ENCODE measurements at regions of chr3 and their contacts with region 1.

Region 1: DNA sequence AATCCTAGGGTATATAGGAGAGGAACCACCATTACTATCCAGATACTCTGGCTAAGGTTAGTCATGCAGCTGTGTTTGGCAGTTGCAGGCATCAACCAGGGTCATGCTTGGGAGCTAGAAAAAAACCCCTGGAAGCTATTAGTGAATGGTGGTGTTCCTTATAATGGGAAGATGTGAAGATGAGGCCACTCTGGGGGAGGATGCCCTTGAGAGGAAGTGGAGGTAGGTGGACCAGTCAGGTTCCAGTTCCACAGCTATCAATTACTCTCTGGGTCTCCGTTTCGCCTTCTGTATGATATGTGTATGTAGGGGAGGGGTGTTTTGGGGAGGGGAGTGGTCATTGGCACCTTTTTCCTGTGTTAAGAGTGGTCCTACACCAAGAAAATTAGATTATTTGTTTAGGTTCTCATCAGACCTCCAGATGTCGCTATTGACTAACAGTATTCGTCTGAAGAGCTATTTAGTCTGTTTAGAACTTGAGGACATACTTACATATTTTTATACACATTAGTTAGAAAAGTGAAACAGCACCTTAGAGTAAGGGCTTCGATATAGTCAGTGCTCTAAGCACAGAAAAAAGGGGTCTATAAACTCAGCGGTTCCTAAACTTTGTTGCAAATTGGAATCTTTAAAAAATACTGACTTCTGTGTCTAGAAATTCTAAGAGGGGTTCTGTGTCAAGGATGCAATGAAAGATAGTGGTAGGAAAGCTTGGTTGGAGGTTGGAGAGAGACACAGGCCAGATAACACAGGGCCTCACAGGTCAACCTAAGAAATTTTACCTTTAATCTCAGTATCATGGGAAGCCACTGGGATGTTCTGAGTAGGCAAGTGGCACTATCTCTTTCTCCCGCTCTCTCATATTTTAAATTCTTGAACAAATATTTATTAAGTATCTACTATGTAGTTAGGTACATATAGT is 9.1 kb upstream of the HPS3 start:
- DNase-seq: peak; percentile 45
- ATAC-seq: peak; percentile 94
- H3K4me3 ChIP-seq: no peak overlapping the region
- H3K27ac ChIP-seq: no peak overlapping the region
- H3K4me1 ChIP-seq: no peaks in the 10 kb centered on the region
- H3K27me3 ChIP-seq: no peaks in the 10 kb centered on the region; a peak in 1 of 4 replicates
- CTCF ChIP-seq: peak; percentile 53 to 73 (median 55); a peak in 5 of 6 replicates
- EP300 ChIP-seq: no peak
- POLR2A ChIP-seq: no peak
- RAD21 ChIP-seq: peak; percentile 94

Region 2: GRCh38 chr3:149145974-149146373 is 25.7 kb after region 1 on chr3:
- CTCF ChIA-PET with region 1: interaction called, 15 read pairs
- POLR2A ChIA-PET with region 1: no interaction called
- RAD21 ChIA-PET with region 1: no interaction called
- SMC1A ChIA-PET with region 1: interaction called, 4 read pairs
- in situ Hi-C with region 1: no loop called
- intact Hi-C with region 1: no loop called
- DNase-seq: no peak
- ATAC-seq: peak; percentile 89
- H3K4me3 ChIP-seq: no peak overlapping the region
- H3K27ac ChIP-seq: no peak overlapping the region
- H3K4me1 ChIP-seq: peaks cover 16% of the 10 kb centered on the region; the same call in 1 of the 2 replicates
- H3K27me3 ChIP-seq: no peaks in the 10 kb centered on the region
- CTCF ChIP-seq: no peak
- EP300 ChIP-seq: no peak
- POLR2A ChIP-seq: no peak
- RAD21 ChIP-seq: no peak

Region 3: DNA sequence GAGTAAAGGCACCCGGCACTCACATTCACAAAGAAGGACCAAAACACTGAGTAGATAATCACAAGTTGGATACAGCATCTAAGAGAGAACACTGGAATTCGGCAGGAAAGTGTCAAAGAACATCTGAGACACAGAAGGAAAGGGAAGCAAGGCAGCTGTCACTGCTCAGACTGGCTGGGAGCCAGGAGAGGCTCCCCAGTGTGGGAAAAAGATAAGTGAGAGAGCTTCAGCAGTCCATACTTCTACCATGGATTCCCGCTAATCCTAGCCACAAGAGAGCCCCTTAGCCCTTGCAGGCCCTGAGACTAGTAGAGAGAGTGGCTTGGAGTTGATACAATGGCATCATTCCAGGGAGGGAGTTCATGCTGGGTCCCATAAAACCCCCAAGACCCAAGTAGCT is 138.0 kb after region 1 on chr3:
- CTCF ChIA-PET with region 1: interaction called, 14 read pairs
- POLR2A ChIA-PET with region 1: no interaction called
- RAD21 ChIA-PET with region 1: interaction called, 5 read pairs
- SMC1A ChIA-PET with region 1: interaction called, 7 read pairs
- in situ Hi-C with region 1: no loop called
- intact Hi-C with region 1: no loop called
- DNase-seq: no peak
- ATAC-seq: no peak
- H3K4me3 ChIP-seq: no peak overlapping the region
- H3K27ac ChIP-seq: no peak overlapping the region
- H3K4me1 ChIP-seq: no peaks in the 10 kb centered on the region
- H3K27me3 ChIP-seq: peaks cover 0 to 1% of the 10 kb centered on the region in 2 experiments; a peak in 1 of 4 replicates
- CTCF ChIP-seq: no peak
- EP300 ChIP-seq: no peak
- POLR2A ChIP-seq: no peak
- RAD21 ChIP-seq: no peak

Region 4: DNA sequence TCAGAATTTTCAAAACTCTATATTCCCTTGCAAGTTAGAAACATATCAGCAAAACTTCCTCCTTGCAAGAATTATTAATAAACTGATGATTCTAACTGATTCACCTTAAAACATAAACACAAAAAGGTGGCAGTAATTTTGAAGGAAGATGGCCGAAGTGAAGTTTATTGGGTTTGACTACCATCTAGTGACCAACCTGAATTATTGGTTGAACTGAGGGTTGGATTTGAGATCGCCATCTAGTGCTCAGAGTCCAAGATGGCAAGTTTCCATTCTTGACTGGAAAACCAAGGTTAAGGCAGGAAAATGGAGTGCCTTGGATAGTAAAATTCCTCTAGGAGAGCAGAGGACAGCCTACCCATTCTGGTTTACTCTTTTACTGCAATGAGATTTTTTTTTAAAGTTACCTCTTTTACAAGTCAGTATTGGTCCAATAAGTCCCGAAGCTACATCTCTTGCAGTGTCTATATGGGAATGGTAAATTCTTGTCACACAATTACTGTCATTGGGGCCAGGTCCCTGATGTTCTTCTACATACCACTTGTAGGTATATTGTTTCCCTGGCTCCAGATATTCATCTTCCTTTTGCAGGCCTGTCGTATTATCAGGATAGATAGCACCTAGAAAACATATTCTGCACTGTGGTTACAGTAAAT is 152.9 kb after region 1 on chr3:
- CTCF ChIA-PET with region 1: interaction called, 168 read pairs
- POLR2A ChIA-PET with region 1: no interaction called
- RAD21 ChIA-PET with region 1: interaction called, 36 read pairs
- SMC1A ChIA-PET with region 1: interaction called, 86 read pairs
- in situ Hi-C with region 1: loop called (anchors 5 kb)
- intact Hi-C with region 1: loop called (anchors 1 kb)
- DNase-seq: peak; percentile 45
- ATAC-seq: peak; percentile 91
- H3K4me3 ChIP-seq: no peak overlapping the region
- H3K27ac ChIP-seq: no peak overlapping the region
- H3K4me1 ChIP-seq: peaks cover 4% of the 10 kb centered on the region; the same call in 1 of the 2 replicates
- H3K27me3 ChIP-seq: no peaks in the 10 kb centered on the region
- CTCF ChIP-seq: peak; percentile 82 to 100 (median 97); a peak in 5 of 6 replicates
- EP300 ChIP-seq: no peak
- POLR2A ChIP-seq: no peak
- RAD21 ChIP-seq: peak; percentile 100

Region 5: DNA sequence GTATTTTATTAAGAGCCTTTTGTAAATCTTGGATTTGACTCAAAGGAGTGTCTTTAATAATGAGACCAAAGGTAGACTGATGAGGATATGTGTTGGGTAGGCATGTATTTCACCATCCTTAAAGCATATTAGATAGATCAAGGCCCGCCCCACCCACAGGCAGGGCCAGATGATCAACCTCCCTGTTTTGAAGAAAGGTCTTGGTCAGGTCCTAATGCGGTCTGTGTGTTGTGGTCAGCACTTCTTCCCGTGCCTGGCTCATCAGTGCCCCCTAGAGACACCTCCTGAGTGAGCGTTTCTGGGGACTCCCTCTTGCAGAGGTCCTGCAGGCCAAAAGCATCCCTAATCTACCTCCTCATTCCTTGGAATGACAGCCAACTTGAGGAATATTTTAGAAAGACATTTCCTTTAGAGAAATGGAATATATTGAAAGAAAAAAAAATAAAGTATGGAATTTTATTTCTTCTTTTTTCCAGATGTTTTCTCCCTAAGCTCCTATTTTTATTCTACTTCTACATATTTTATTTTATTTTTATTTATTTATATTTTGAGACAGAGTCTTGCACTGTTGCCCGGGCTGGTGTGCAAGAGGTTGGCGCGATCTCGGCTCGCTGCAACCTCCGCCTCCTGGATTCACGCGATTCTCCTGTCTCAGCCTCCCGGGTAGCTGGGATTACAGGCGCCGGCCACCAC is 360.2 kb after region 1 on chr3:
- CTCF ChIA-PET with region 1: interaction called, 8 read pairs
- POLR2A ChIA-PET with region 1: no interaction called
- RAD21 ChIA-PET with region 1: no interaction called
- SMC1A ChIA-PET with region 1: interaction called, 3 read pairs
- in situ Hi-C with region 1: loop called (anchors 10 kb)
- intact Hi-C with region 1: loop called (anchors 5 kb)
- DNase-seq: peak; percentile 52
- ATAC-seq: peak; percentile 99
- H3K4me3 ChIP-seq: no peak overlapping the region
- H3K27ac ChIP-seq: no peak overlapping the region
- H3K4me1 ChIP-seq: no peaks in the 10 kb centered on the region
- H3K27me3 ChIP-seq: no peaks in the 10 kb centered on the region
- CTCF ChIP-seq: peak; percentile 86 to 95 (median 93)
- EP300 ChIP-seq: no peak
- POLR2A ChIP-seq: no peak
- RAD21 ChIP-seq: peak; percentile 97